ENCODE measurements at regions of chr12 and their contacts with region 1.

Region 1: DNA sequence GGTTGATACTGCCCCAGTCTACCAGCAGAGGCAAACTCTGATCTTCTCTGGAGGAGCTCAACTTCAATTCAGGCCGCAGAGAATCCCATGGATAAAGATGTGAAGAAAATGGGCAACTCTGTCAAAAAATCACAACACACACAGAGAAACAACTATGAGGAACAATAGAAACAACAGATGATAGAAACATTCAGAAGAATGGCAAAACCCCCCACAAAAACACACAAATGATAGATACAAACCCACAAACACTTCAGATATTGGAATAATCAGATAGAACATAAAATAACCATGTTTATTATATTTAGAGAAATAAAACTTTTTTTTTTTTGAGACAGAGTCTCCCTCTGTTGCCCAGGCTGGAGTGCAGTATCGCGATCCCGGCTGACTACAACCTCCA is 20.0 kb upstream of the HVCN1 start:
- DNase-seq: no peak
- ATAC-seq: no peak
- H3K4me3 ChIP-seq: no peak overlapping the region
- H3K4me3 Mint-ChIP-seq: no peak overlapping the region
- H3K27ac ChIP-seq: no peak overlapping the region
- H3K27ac Mint-ChIP-seq: no peak overlapping the region
- H3K4me1 ChIP-seq: no peaks in the 10 kb centered on the region
- H3K4me1 Mint-ChIP-seq: peaks cover 0 to 3% (median 0%) of the 10 kb centered on the region in 3 donors
- H3K27me3 ChIP-seq: no peaks in the 10 kb centered on the region
- H3K27me3 Mint-ChIP-seq: no peaks in the 10 kb centered on the region

Region 2: GRCh38 chr12:110794623-110795280 is 85.8 kb after region 1 on chr12:
- CTCF ChIA-PET with region 1: no interaction called
- POLR2A ChIA-PET with region 1: no interaction called
- DNase-seq: no peak
- ATAC-seq: no peak
- H3K4me3 ChIP-seq: no peak overlapping the region
- H3K4me3 Mint-ChIP-seq: no peak overlapping the region
- H3K27ac ChIP-seq: no peak overlapping the region
- H3K27ac Mint-ChIP-seq: no peak overlapping the region
- H3K4me1 ChIP-seq: no peaks in the 10 kb centered on the region
- H3K4me1 Mint-ChIP-seq: peaks cover 0 to 10% (median 0%) of the 10 kb centered on the region in 3 donors
- H3K27me3 ChIP-seq: no peaks in the 10 kb centered on the region
- H3K27me3 Mint-ChIP-seq: no peaks in the 10 kb centered on the region

Region 3: DNA sequence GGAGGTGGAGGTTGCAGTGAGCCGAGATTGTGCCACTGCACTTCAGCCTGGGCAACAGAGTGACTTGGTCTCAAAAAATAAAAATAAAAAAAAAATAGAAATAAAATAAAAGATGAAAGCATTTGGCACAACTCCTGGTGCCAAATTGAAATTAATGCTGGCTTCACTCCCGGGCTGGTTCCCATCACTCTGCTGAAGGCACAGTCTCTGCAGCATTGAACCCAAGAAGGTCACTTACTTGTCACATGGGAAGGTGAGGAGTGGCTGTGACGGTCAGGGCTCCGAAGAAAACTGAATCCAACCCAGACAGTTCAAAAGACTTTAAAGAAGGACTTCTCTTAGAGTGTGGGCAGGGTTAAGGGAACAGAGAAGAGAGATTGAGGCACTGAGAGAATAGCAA is 127.4 kb after region 1 on chr12:
- CTCF ChIA-PET with region 1: no interaction called
- POLR2A ChIA-PET with region 1: interaction called in 1 of 2 experiments, 12 read pairs
- DNase-seq: no peak
- ATAC-seq: no peak
- H3K4me3 ChIP-seq: no peak overlapping the region
- H3K4me3 Mint-ChIP-seq: no peak overlapping the region
- H3K27ac ChIP-seq: no peak overlapping the region
- H3K27ac Mint-ChIP-seq: no peak overlapping the region
- H3K4me1 ChIP-seq: no peaks in the 10 kb centered on the region
- H3K4me1 Mint-ChIP-seq: no peaks in the 10 kb centered on the region
- H3K27me3 ChIP-seq: peaks cover 0 to 4% of the 10 kb centered on the region in 2 experiments
- H3K27me3 Mint-ChIP-seq: peaks cover 7 to 15% of the 10 kb centered on the region in 2 donors